CD4-positive, alpha-beta T cell (primary cell): ENCODE measurements at regions of chr12 and their contacts with region 1.

Region 1: DNA sequence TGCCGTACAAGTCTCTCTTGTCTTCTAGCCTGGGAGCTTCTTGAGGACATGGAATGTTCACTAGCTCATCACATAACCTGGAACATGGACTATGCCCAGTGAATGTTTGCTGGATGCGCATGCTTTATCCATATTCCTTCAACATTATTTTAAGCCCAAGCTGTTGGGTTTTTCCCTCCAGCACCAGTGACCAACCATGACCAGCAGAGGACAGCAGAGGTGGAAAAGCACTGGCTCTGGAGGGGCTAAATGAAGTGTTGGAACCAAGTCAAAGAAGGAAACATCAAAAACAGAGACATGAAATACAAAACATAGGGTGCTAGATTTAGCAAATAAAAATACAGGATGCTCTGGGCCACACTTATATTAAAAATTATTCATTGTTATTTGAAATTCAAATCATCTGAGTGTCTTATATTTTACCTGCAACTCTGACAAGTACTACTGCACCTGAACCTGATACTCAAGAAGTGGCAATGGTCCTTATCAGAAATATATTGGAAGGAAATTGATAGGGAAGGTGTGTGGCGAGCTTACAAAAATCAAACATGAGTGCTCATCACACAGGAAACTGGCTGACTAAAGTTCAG is 23.1 kb upstream of the HELB start:
- DNase-seq: peak; percentile 29 to 74 (median 42)
- ATAC-seq: peak; percentile 76
- H3K4me3 ChIP-seq: no peak overlapping the region
- H3K4me3 Mint-ChIP-seq: peak overlapping the region; percentile 2
- H3K27ac ChIP-seq: no peak overlapping the region
- H3K27ac Mint-ChIP-seq: no peak overlapping the region
- H3K4me1 ChIP-seq: peaks cover 27% of the 10 kb centered on the region
- H3K4me1 Mint-ChIP-seq: peaks cover 66% of the 10 kb centered on the region
- H3K27me3 ChIP-seq: no peaks in the 10 kb centered on the region
- H3K27me3 Mint-ChIP-seq: no peaks in the 10 kb centered on the region
- CTCF ChIP-seq: peak; percentile 83

Region 2: DNA sequence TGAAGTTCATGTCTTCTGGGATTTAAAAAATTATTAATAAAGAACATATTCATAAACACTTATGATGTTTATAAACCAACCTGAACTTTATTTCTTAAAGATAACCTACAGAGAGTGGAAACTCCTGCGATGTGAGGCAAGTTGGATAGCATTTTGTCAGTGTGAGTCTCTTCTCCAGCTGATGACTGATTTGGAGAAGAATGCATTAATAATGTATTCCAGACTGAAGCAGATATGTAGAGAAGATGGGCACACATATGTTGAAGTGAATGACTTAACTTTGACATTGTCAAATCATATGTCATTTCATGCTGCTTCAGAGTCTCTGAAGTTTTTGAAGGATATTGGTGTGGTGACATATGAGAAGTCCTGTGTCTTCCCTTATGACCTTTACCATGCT is 30.4 kb after region 1 on chr12:
- CTCF ChIA-PET with region 1: interaction called, 22 read pairs
- POLR2A ChIA-PET with region 1: interaction called, 24 read pairs
- intact Hi-C with region 1: loop called (anchors 2 to 5 kb)
- DNase-seq: no peak
- ATAC-seq: no peak
- H3K4me3 ChIP-seq: no peak overlapping the region
- H3K4me3 Mint-ChIP-seq: peak overlapping the region; percentile 71
- H3K27ac ChIP-seq: no peak overlapping the region
- H3K27ac Mint-ChIP-seq: peak overlapping the region; percentile 48
- H3K4me1 ChIP-seq: peaks cover 28% of the 10 kb centered on the region
- H3K4me1 Mint-ChIP-seq: peaks cover 91% of the 10 kb centered on the region
- H3K27me3 ChIP-seq: no peaks in the 10 kb centered on the region
- H3K27me3 Mint-ChIP-seq: no peaks in the 10 kb centered on the region
- CTCF ChIP-seq: no peak